ENCODE measurements at regions of chrX and their contacts with region 1.

Region 1: GRCh38 chrX:152926279-152926678 is 28.4 kb downstream of the ZNF185 start:
- DNase-seq: peak; percentile 87
- H3K4me3 Mint-ChIP-seq: no peak overlapping the region
- H3K27ac Mint-ChIP-seq: no peak overlapping the region
- H3K4me1 Mint-ChIP-seq: no peaks in the 10 kb centered on the region
- H3K27me3 Mint-ChIP-seq: no peaks in the 10 kb centered on the region
- CTCF ChIP-seq: peak; percentile 38

Region 2: DNA sequence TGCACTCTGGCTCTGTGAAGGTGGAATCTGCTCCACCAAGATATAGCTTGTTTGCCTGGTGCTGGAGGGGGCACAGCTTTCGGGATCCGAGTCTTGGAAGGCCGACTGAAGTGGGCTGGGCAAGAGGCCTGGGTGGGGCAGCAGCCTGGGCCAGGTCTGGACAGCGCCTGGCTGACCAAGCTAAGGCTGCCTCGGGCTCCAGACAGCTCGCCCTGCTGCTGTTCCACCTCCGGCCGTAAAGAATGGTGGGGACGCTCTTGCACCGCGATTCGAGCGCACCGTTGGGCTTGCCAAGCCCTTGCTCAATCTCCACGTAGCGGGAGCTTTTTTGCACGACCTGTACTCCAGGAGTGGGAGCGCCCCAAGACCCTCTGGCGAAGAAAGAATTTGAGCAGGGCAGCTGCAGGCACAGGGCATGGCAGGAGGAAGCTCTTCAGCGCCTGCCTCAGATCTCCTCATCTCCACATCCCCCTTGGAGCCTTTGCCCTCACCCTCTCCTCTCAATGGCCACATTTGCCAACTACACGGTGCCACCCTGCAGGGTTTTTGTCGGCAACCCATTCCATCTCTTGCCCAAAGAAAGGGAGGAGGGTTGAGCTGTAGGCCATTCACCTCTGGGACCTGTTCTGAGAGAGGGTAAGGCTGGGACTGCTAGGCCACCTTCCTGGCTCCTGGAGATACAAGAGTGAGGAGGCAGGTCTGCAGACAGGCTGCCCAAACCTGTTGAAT is 1172.8 kb before region 1 on chrX:
- CTCF ChIA-PET with region 1: interaction called, 5 read pairs
- POLR2A ChIA-PET with region 1: no interaction called
- intact Hi-C with region 1: loop called (anchors 2 kb)
- DNase-seq: peak; percentile 73
- H3K4me3 Mint-ChIP-seq: peak overlapping the region; percentile 36
- H3K27ac Mint-ChIP-seq: peak overlapping the region; percentile 11
- H3K4me1 Mint-ChIP-seq: peaks cover 12% of the 10 kb centered on the region
- H3K27me3 Mint-ChIP-seq: no peaks in the 10 kb centered on the region
- CTCF ChIP-seq: peak; percentile 78

Region 3: GRCh38 chrX:152465132-152465531 is 461.1 kb before region 1 on chrX:
- CTCF ChIA-PET with region 1: no interaction called
- POLR2A ChIA-PET with region 1: no interaction called
- intact Hi-C with region 1: no loop called
- DNase-seq: no peak
- H3K4me3 Mint-ChIP-seq: no peak overlapping the region
- H3K27ac Mint-ChIP-seq: no peak overlapping the region
- H3K4me1 Mint-ChIP-seq: no peaks in the 10 kb centered on the region
- H3K27me3 Mint-ChIP-seq: no peaks in the 10 kb centered on the region
- CTCF ChIP-seq: no peak

Region 4: GRCh38 chrX:152830312-152831305 is 95.7 kb before region 1 on chrX and contains the starts of genes CETN2 and NSDHL:
- CTCF ChIA-PET with region 1: interaction called, 6 read pairs
- POLR2A ChIA-PET with region 1: no interaction called
- intact Hi-C with region 1: loop called (anchors 2 kb)
- DNase-seq: peak; percentile 94
- H3K4me3 Mint-ChIP-seq: peak within 1 kb of the TSS; percentile 93
- H3K27ac Mint-ChIP-seq: peak within 1 kb of the TSS; percentile 99
- H3K4me1 Mint-ChIP-seq: peaks cover 7% of the 10 kb centered on the region
- H3K27me3 Mint-ChIP-seq: no peaks in the 10 kb centered on the region
- CTCF ChIP-seq: no peak
- total RNA-seq, gene CETN2: 22.5 and 29.3 TPM in 2 replicates
- total RNA-seq, gene NSDHL: 12.8 and 13.7 TPM in 2 replicates

Region 5: DNA sequence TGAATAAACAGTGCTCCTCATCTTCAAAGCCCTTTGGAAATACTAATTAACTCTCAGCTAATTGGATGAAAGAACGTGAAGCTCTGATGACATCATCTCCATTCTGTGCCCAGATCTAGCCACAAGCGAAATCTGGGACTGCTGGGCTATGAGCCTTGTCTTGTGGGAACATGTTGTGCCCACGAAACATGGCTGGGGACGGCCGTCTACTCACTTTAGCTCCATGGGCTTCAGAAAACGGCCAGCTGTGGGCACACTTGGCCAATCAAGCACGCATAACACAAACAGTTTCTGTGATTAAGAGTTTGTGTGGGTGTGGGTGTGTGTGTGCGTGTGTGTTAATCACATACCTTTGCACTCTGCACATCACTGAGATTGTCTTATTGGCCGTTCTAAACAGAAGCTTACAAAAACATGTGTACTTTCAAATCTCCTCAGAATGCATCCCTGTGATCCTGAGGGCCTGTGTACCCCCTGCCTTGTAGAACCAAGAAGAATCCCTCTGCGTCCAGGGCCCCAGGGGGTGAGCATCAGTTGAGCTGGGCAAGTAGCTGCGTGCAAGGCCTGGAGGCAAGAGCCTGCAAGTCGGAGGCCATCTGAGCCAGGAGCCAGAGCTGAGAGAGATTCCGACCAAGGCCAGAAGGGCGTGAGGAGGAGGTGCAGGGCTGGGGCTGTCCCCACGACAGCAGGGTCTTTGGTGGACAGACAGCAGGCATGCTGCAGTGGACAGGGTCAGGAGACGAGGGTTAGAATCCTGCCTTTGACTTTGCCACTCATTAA is 47.1 kb before region 1 on chrX:
- CTCF ChIA-PET with region 1: interaction called, 18 read pairs
- POLR2A ChIA-PET with region 1: interaction called, 7 read pairs
- intact Hi-C with region 1: no loop called
- DNase-seq: peak; percentile 56
- H3K4me3 Mint-ChIP-seq: no peak overlapping the region
- H3K27ac Mint-ChIP-seq: peak overlapping the region; percentile 51
- H3K4me1 Mint-ChIP-seq: peaks cover 15% of the 10 kb centered on the region
- H3K27me3 Mint-ChIP-seq: no peaks in the 10 kb centered on the region
- CTCF ChIP-seq: no peak

Region 6: DNA sequence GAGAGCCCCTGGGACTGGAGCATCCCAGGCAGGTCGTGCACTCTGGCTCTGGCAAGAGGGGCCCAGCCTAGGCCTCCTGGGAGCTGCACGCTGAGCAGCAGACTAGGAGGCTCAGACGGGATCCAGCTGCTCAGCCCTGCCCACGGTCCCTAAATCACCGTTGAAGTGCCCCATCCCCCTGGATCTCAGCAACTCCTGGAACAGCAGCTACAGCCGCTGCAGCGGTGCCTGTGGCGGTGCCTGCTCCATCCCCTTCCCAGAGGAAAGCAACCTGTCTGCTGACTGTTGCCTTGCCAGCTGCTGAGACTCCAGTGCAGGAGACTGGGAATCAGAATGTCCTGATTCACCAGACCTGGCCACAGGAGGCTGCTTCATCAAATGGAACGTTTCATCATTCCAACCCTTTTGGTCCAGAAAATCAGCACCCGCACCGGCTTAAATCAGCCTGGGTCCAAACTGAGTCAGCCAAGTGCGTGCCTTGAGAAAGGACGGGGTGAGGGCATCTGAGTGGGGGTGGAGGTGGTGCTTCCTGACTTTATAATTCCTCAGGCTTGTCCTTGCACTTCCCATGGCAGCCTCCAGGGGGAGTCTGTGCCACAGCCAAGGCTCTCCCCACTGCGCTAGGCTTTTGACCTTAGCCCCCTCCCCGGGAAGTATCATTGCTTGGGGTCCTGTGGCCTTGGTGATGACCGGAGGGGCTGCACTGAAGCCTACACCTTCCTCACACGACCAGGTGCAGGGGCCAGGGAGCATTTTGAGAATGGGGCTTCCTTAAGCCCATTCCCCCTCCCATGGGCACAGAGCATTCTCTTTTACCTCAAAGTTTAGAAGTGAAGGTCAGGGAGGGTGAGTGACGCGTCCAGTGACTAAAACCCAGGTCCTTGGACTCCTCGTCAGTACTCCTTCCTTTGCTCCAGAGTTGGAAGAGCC is 21.9 kb before region 1 on chrX:
- CTCF ChIA-PET with region 1: interaction called, 12 read pairs
- POLR2A ChIA-PET with region 1: interaction called, 3 read pairs
- intact Hi-C with region 1: loop called (anchors 1 kb)
- DNase-seq: peak; percentile 60
- H3K4me3 Mint-ChIP-seq: no peak overlapping the region
- H3K27ac Mint-ChIP-seq: no peak overlapping the region
- H3K4me1 Mint-ChIP-seq: no peaks in the 10 kb centered on the region
- H3K27me3 Mint-ChIP-seq: no peaks in the 10 kb centered on the region
- CTCF ChIP-seq: peak; percentile 68

Region 7: GRCh38 chrX:152915527-152916241 is 10.6 kb before region 1 on chrX:
- CTCF ChIA-PET with region 1: interaction called, 17 read pairs
- POLR2A ChIA-PET with region 1: no interaction called
- intact Hi-C with region 1: no loop called
- DNase-seq: peak; percentile 29
- H3K4me3 Mint-ChIP-seq: no peak overlapping the region
- H3K27ac Mint-ChIP-seq: no peak overlapping the region
- H3K4me1 Mint-ChIP-seq: no peaks in the 10 kb centered on the region
- H3K27me3 Mint-ChIP-seq: no peaks in the 10 kb centered on the region
- CTCF ChIP-seq: peak; percentile 32

Measured in MCF 10A (cell line).